Upper lobe of right lung (tissue), 1 donor: ENCODE measurements at regions of chr11 and their contacts with region 1.

Region 1: GRCh38 chr11:67630228-67630942 is 648 bp upstream of the NUDT8 start:
- DNase-seq: peak; percentile 100
- ATAC-seq: peak; percentile 91
- H3K4me3 ChIP-seq: peak overlapping the region; percentile 75
- H3K27ac ChIP-seq: peak overlapping the region; percentile 85
- H3K4me1 ChIP-seq: peaks cover 6% of the 10 kb centered on the region
- H3K27me3 ChIP-seq: no peaks in the 10 kb centered on the region
- CTCF ChIP-seq: peak; percentile 70

Region 2: DNA sequence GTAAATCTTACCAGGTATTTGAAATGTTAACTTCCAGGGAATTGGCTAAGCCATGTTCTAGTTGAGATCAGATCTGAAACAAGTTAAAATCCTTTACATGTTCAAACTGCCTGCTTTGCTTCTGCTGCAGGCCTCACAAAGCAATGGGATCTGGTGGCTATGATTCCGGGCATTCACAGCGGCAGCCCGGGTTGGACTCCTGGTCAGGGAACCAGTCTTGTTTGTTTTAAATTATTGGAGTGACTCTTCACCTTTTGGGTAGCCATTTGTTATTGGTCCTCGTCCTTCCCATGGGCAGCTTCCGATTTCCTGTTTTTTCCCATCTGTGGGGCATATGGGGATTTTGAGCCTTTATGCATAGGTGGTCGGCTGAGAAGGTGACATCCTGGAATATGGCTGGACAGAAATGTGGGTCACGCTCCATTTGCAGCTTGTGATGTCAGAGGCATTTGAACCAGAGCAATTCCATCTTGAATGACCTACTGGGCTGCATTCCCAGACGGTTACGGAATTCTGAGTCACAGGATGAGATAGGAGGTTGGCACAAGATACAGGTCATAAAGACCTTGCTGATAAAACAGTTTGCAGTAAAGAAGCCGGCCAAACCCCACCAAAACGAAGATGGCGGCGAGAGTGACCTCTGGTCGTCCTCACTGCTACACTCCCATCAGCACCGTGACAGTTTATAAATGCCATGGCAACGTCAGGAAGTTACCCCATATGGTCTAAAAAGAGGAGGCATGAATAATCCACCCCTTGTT is 66.9 kb before region 1 on chr11:
- intact Hi-C with region 1: no loop called
- DNase-seq: no peak
- ATAC-seq: no peak
- H3K4me3 ChIP-seq: no peak overlapping the region
- H3K27ac ChIP-seq: peak overlapping the region; percentile 17
- H3K4me1 ChIP-seq: peaks cover 7% of the 10 kb centered on the region
- H3K27me3 ChIP-seq: no peaks in the 10 kb centered on the region
- CTCF ChIP-seq: no peak

Region 3: DNA sequence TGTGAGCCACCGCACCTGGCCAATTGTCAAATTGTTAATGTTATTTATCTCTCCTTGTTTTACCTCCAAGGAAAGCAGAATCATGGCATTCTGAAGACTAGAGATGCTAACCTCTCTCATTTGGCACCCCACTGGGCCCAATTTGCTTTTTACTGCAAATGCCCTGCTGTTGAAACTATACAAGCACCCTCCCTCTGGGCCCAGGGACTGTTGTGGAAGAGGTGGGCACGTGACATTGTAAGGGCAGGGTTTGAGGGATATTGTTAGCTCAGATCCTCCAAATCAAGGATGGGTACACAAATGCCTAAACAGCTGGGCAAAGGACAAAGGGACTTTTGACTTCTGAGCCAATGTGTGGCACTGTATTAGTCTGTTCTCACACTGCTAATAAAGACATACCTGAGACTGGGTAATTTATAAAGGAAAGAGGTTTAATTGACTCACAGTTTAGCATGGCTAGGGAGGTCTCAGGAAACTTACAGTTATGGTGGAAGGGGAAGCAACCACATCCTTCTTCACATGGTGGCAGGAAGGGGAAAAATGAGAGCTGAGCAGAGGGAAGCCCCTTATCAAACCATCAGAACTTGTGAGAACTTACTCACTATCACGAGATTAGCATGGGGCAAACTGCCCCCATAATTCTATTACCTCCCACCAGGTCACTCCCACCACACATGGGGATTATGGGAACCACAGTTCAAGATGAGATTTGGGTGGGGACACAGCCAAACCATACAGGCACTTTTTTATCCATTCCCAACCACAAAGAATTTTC is 50.5 kb after region 1 on chr11:
- intact Hi-C with region 1: loop called (anchors 5 kb)
- DNase-seq: no peak
- ATAC-seq: no peak
- H3K4me3 ChIP-seq: no peak overlapping the region
- H3K27ac ChIP-seq: no peak overlapping the region
- H3K4me1 ChIP-seq: no peaks in the 10 kb centered on the region
- H3K27me3 ChIP-seq: no peaks in the 10 kb centered on the region
- CTCF ChIP-seq: no peak